SK-N-SH (cell line): ENCODE measurements at regions of chr1 and their contacts with region 1.

Region 1: DNA sequence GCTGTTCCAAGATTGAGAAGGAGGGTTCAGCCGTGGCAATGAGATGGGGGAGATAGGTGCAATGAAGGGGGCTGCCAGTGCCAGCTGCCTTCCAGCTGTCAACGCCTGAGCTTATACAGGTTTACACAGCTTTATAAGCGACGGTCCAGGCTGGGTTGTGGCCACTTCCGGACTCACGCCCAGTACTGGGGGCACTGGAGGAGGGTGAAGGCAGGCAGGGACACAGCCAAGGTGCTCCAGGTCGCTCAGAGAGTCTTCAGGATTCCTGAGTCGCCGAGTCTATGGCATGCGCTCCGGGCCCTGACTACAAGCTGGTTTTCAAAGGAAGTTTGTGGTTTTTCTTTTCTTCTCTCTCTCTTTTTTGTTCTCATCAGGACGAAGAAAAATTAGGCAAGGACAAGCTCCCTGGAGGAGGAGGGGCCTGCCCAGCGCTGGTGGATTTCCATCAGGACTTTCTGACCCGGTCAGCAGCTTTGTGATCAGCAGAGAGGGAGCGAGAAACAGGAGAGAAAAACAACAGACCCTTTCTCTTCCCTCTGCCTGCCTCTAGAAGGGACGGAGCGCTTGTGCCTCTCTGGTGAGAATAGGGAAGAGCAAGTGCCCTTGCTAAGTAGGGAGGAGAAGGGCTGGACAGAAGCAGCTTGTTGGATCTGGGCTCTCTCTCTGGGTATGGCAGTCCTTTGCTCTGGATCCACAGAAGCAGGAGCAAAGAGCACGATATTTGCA is at the start of gene MINDY1:
- DNase-seq: peak; percentile 82
- H3K4me3 ChIP-seq: peak within 1 kb of the TSS; percentile 56 to 62
- H3K27ac ChIP-seq: peak within 1 kb of the TSS; percentile 86 to 93
- H3K4me1 ChIP-seq: peaks cover 6 to 30% of the 10 kb centered on the region in 2 experiments; a peak in 2 of 4 replicates
- H3K27me3 ChIP-seq: no peaks in the 10 kb centered on the region
- CTCF ChIP-seq: peak; percentile 61
- EP300 ChIP-seq: no peak
- RAD21 ChIP-seq: peak; percentile 64
- polyA plus RNA-seq, gene MINDY1: 6.0 and 6.7 TPM in 2 replicates

Region 2: GRCh38 chr1:150846473-150847146 is 159.9 kb before region 1 on chr1:
- CTCF ChIA-PET with region 1: no interaction called
- POLR2A ChIA-PET with region 1: no interaction called
- DNase-seq: no peak
- H3K4me3 ChIP-seq: no peak overlapping the region
- H3K27ac ChIP-seq: no peak overlapping the region
- H3K4me1 ChIP-seq: no peaks in the 10 kb centered on the region
- H3K27me3 ChIP-seq: no peaks in the 10 kb centered on the region
- CTCF ChIP-seq: no peak
- EP300 ChIP-seq: no peak
- RAD21 ChIP-seq: no peak

Region 3: DNA sequence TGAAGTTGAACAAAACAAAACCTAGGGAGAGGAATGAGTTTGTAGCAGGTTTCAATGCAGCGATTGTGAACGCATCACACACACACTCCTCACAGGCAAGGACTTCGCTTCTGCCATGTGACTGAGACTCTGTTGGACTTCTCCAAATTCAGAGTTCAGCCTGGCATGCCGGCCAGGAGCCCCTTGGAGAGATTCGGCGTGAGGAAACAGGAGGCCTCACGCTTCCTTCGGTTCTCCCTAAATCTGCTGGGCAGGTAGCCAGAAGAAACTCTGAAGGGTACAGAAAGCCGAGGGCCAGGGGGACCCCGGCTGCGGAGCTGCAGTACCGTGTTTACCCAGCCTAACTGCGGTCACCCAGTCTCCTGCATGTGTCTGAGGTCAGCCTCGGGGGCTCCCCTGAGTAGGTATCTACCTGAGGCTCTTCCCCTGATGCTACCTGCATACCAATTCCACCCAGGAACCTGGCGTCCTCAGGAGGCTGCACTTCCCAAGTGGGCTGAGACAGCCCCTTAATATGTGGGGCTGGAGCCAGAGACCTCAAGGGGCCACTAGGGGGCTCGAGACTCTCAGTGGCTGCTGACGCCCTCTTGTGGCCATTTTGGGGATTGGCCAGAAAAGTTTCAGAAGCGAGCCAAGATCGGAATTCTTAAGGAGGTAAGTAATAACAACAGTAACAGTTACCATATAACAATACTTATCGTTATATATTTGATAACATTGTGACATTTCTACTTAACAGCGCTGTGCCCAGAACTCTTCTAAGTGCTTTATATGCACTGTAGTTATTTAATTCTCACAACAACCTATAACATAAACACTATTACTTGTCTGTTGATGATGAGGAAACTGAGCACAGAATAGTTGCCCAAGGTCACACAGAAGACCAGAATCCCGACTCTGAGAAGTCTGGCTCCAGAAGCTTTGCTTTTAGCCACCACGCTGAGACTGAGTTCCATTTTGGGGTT is 27.1 kb before region 1 on chr1:
- CTCF ChIA-PET with region 1: interaction called, 371 read pairs
- POLR2A ChIA-PET with region 1: interaction called, 10 read pairs
- DNase-seq: peak; percentile 92
- H3K4me3 ChIP-seq: peak overlapping the region in 1 of 2 experiments; percentile 39; a peak in 1 of 4 replicates
- H3K27ac ChIP-seq: peak overlapping the region; percentile 35 to 60; a peak in 2 of 4 replicates
- H3K4me1 ChIP-seq: peaks cover 23 to 28% of the 10 kb centered on the region in 2 experiments
- H3K27me3 ChIP-seq: no peaks in the 10 kb centered on the region
- CTCF ChIP-seq: peak; percentile 100
- EP300 ChIP-seq: no peak
- RAD21 ChIP-seq: peak; percentile 76

Region 4: GRCh38 chr1:150995896-150996295 is 10.6 kb before region 1 on chr1:
- CTCF ChIA-PET with region 1: interaction called, 79 read pairs
- POLR2A ChIA-PET with region 1: interaction called, 6 read pairs
- DNase-seq: peak; percentile 43
- H3K4me3 ChIP-seq: peak overlapping the region in 1 of 2 experiments; percentile 25; a peak in 1 of 4 replicates
- H3K27ac ChIP-seq: no peak overlapping the region
- H3K4me1 ChIP-seq: no peaks in the 10 kb centered on the region
- H3K27me3 ChIP-seq: no peaks in the 10 kb centered on the region
- CTCF ChIP-seq: peak; percentile 86
- EP300 ChIP-seq: no peak
- RAD21 ChIP-seq: peak; percentile 60

Region 5: GRCh38 chr1:151059078-151059907 is 52.8 kb after region 1 on chr1 and contains the start of gene CDC42SE1:
- CTCF ChIA-PET with region 1: interaction called, 10 read pairs
- POLR2A ChIA-PET with region 1: interaction called, 9 read pairs
- DNase-seq: peak; percentile 93
- H3K4me3 ChIP-seq: peak within 1 kb of the TSS; percentile 79 to 81
- H3K27ac ChIP-seq: peak within 1 kb of the TSS; percentile 99
- H3K4me1 ChIP-seq: peaks cover 11 to 28% of the 10 kb centered on the region in 2 experiments; a peak in 3 of 4 replicates
- H3K27me3 ChIP-seq: no peaks in the 10 kb centered on the region
- CTCF ChIP-seq: peak; percentile 68
- EP300 ChIP-seq: no peak; a peak in 1 of 4 replicates
- RAD21 ChIP-seq: no peak; the same call in 1 of the 2 replicates
- polyA plus RNA-seq, gene CDC42SE1: 47.8 and 65.6 TPM in 2 replicates